ENCODE measurements at regions of chr9 and their contacts with region 1.

Region 1: GRCh38 chr9:37465249-37466036 is at the start of gene ZBTB5:
- H3K4me3 Mint-ChIP-seq: peak within 1 kb of the TSS; percentile 92
- H3K27ac Mint-ChIP-seq: peak within 1 kb of the TSS; percentile 96
- H3K4me1 Mint-ChIP-seq: peaks cover 45% of the 10 kb centered on the region
- H3K27me3 Mint-ChIP-seq: no peaks in the 10 kb centered on the region

Region 2: DNA sequence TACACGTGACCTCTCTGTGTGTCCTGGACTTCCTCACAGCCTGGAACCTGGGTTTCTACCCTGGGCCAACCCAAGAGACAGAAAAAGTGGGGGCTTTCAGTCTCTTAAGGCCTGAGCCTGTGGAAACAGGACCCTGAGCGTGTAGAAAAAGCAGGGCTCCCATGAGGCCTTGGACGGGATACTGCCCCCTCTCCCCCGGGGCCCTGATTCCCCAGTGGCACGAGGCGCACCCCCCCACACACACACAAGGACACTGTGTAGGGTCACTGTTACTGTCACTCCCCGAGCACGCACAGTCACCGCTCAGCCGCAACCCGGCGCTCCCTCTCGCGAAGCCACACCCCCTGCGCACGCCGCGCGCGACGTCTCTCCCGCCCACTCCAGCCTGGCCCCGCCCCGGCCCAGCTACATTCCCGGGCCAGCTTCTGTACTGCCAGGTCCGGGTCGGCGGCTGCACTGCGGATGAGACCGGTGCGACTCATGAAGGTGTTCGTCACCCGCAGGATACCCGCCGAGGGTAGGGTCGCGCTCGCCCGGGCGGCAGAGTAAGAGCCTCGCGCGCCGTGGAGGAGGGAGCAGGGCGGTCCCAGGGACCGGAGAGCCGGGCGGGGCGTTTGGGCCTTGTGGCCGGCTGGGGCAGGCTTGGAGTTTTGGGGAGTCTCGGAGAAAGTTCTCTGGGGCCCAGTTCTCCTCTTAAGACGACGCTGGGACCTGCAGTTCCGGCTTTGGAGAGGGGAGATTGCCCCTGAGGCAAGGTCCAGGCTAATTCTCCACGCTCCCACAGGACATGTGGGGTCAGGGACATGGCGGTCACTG is 42.9 kb before region 1 on chr9 and contains the start of gene GRHPR:
- intact Hi-C with region 1: loop called (anchors 2 kb)
- H3K4me3 Mint-ChIP-seq: peak within 1 kb of the TSS; percentile 96
- H3K27ac Mint-ChIP-seq: peak within 1 kb of the TSS; percentile 95
- H3K4me1 Mint-ChIP-seq: peaks cover 31% of the 10 kb centered on the region
- H3K27me3 Mint-ChIP-seq: no peaks in the 10 kb centered on the region